ENCODE measurements at regions of chr12 and their contacts with region 1.

Region 1: DNA sequence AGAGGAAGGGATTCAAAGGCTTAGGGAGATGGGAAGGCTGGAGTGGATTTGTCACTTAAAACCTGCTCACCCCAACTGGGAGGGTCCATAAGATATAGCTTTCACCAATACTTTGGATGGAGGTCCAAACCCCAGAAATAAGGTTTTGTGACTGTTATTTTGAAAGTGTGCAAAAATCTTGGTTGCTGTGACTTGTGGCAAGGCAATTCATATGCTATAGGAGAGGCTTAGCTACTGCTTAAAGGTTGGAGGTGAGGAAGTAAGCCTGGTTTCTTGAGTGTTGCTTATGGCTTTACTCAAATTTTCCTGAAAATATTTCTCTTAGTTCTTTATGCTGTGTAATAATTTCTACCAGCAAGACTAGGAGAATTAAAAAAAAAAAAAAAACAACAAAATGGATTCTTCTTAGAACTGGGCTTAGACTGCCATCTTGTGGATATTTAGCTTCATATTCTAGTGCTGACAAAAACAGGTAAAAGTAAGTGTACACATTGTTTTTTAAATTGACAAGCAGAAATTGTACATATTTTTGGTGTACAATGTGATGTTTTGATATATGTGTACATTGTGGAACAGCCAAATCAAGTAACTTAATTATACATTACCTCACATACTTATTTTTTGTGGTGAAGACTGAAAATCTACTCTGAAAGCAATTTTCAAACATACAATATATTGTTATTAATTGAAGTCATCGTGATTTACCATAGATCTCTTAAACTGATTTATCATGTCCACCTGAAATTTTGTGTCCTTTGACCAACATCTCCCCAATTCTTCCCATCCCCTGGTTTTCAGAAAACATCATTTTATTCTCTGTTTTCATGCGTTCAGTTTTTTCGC is 23.0 kb downstream of the PDE6H start:
- DNase-seq: peak in 7 of 9 donors; percentile 27 to 76 (median 58)
- ATAC-seq: peak; percentile 84
- H3K4me3 ChIP-seq: no peak overlapping the region
- H3K4me3 Mint-ChIP-seq: peak overlapping the region in 8 of 10 donors; percentile 9 to 73 (median 62)
- H3K27ac ChIP-seq: peak overlapping the region; percentile 14
- H3K27ac Mint-ChIP-seq: peak overlapping the region; percentile 6 to 93 (median 88)
- H3K4me1 ChIP-seq: peaks cover 16 to 27% of the 10 kb centered on the region in 2 donors
- H3K4me1 Mint-ChIP-seq: peaks cover 21 to 35% (median 31%) of the 10 kb centered on the region in 7 donors
- H3K27me3 ChIP-seq: peaks cover 0 to 4% of the 10 kb centered on the region in 2 donors
- H3K27me3 Mint-ChIP-seq: peaks cover 0 to 32% (median 0%) of the 10 kb centered on the region in 5 donors

Region 2: GRCh38 chr12:14601692-14602478 is 393.9 kb before region 1 on chr12:
- CTCF ChIA-PET with region 1: no interaction called
- POLR2A ChIA-PET with region 1: no interaction called
- intact Hi-C with region 1: no loop called
- DNase-seq: no peak
- ATAC-seq: no peak
- H3K4me3 ChIP-seq: no peak overlapping the region
- H3K4me3 Mint-ChIP-seq: no peak overlapping the region
- H3K27ac ChIP-seq: no peak overlapping the region
- H3K27ac Mint-ChIP-seq: no peak overlapping the region
- H3K4me1 ChIP-seq: no peaks in the 10 kb centered on the region
- H3K4me1 Mint-ChIP-seq: no peaks in the 10 kb centered on the region
- H3K27me3 ChIP-seq: no peaks in the 10 kb centered on the region
- H3K27me3 Mint-ChIP-seq: peaks cover 16 to 35% (median 24%) of the 10 kb centered on the region in 5 donors

Region 3: DNA sequence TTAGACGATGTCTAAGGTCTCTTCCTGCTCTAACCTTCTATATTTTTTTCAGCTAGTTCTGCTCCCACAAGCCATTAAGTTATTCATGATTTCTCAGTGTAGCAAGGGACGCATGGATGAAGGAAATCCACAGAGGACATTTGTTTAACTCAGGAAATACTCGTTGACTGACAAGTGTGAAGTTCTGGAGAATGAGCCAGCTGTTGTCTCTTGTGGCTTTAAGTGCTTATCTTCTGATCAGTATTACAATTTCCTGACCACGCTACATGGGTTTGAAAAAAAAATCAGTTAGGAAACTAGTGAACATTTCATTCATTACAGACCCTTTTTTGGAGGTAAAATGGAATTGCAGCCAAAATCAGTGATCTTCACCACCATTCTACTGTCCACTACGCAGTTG is 352.6 kb before region 1 on chr12:
- CTCF ChIA-PET with region 1: no interaction called
- POLR2A ChIA-PET with region 1: no interaction called
- intact Hi-C with region 1: loop called in 1 of 2 experiments (anchors 5 kb)
- DNase-seq: peak in 6 of 9 donors; percentile 29 to 52 (median 42)
- ATAC-seq: peak; percentile 46
- H3K4me3 ChIP-seq: no peak overlapping the region
- H3K4me3 Mint-ChIP-seq: peak overlapping the region; percentile 35 to 79 (median 71)
- H3K27ac ChIP-seq: no peak overlapping the region
- H3K27ac Mint-ChIP-seq: peak overlapping the region; percentile 8 to 83 (median 54)
- H3K4me1 ChIP-seq: peaks cover 14 to 21% of the 10 kb centered on the region in 2 donors
- H3K4me1 Mint-ChIP-seq: peaks cover 15 to 26% (median 24%) of the 10 kb centered on the region in 7 donors
- H3K27me3 ChIP-seq: no peaks in the 10 kb centered on the region
- H3K27me3 Mint-ChIP-seq: peaks cover 0 to 9% (median 0%) of the 10 kb centered on the region in 5 donors

Region 4: DNA sequence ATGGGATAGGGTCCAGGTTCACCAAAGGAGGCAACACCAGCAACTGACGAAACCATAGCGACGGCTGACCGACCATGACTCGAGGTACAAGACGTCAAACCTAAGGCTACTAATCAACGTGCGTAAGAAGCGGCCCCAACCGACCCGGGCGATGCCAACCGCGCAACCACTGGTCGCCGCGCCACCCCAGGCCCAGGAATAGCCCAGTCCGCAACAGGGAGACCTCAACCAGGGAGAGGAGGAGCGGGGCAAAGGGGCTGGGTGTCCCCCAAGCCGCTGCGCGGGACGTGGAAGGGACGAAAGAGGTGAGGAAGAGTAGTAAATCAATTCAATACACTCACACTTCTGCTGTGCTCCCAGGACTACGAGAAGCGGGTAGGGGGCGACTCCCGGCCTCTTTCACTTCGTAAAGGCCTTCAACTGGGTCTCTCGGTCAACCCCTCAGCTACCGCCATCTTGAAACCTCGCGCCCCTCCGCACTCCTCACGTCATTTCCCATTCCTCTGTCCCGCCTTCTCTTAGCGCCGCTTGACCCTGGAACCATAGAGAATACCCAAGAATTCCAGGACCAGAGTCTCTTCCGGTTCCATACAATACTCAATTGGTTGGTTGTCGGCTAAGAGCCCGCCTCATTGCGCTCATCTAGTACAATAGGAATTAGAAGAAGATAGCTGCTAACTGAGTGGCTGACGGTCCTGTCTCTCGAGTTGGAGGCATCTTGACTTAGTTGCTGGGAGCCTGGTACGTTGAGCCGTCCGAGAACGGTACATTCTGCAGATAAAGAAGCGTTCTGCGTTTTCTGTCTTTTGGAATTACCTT is 192.6 kb before region 1 on chr12 and contains the starts of genes C12orf60 and WBP11:
- CTCF ChIA-PET with region 1: no interaction called
- POLR2A ChIA-PET with region 1: interaction called, 15 read pairs
- intact Hi-C with region 1: loop called in 1 of 2 experiments (anchors 1 kb)
- DNase-seq: peak; percentile 56 to 95 (median 91)
- ATAC-seq: peak; percentile 98
- H3K4me3 ChIP-seq: peak within 1 kb of the TSS; percentile 80
- H3K4me3 Mint-ChIP-seq: no peak within 1 kb of the TSS
- H3K27ac ChIP-seq: peak within 1 kb of the TSS; percentile 97
- H3K27ac Mint-ChIP-seq: no peak within 1 kb of the TSS
- H3K4me1 ChIP-seq: peaks cover 14 to 19% of the 10 kb centered on the region in 2 donors
- H3K4me1 Mint-ChIP-seq: peaks cover 0 to 26% (median 10%) of the 10 kb centered on the region in 7 donors
- H3K27me3 ChIP-seq: no peaks in the 10 kb centered on the region
- H3K27me3 Mint-ChIP-seq: no peaks in the 10 kb centered on the region
- total RNA-seq, gene C12orf60: 0.22 to 1.7 (median 1.2) TPM in 4 of 5 experiments, not detected in the other
- total RNA-seq, gene WBP11: 77.9 to 129 (median 90.4) TPM

Region 5: GRCh38 chr12:14901228-14901562 is 94.6 kb before region 1 on chr12:
- CTCF ChIA-PET with region 1: no interaction called
- POLR2A ChIA-PET with region 1: no interaction called
- intact Hi-C with region 1: no loop called
- DNase-seq: no peak
- ATAC-seq: no peak
- H3K4me3 ChIP-seq: no peak overlapping the region
- H3K4me3 Mint-ChIP-seq: no peak overlapping the region
- H3K27ac ChIP-seq: no peak overlapping the region
- H3K27ac Mint-ChIP-seq: peak overlapping the region in 1 of 9 donors; percentile 48
- H3K4me1 ChIP-seq: peaks cover 0 to 3% of the 10 kb centered on the region in 2 donors
- H3K4me1 Mint-ChIP-seq: peaks cover 6 to 38% (median 21%) of the 10 kb centered on the region in 7 donors
- H3K27me3 ChIP-seq: no peaks in the 10 kb centered on the region
- H3K27me3 Mint-ChIP-seq: no peaks in the 10 kb centered on the region

Region 6: GRCh38 chr12:14913381-14913781 is 82.4 kb before region 1 on chr12:
- CTCF ChIA-PET with region 1: no interaction called
- POLR2A ChIA-PET with region 1: no interaction called
- intact Hi-C with region 1: no loop called
- DNase-seq: no peak
- ATAC-seq: no peak
- H3K4me3 ChIP-seq: no peak overlapping the region
- H3K4me3 Mint-ChIP-seq: no peak overlapping the region
- H3K27ac ChIP-seq: no peak overlapping the region
- H3K27ac Mint-ChIP-seq: peak overlapping the region in 5 of 9 donors; percentile 7 to 81 (median 46)
- H3K4me1 ChIP-seq: no peaks in the 10 kb centered on the region
- H3K4me1 Mint-ChIP-seq: peaks cover 10 to 29% (median 25%) of the 10 kb centered on the region in 7 donors
- H3K27me3 ChIP-seq: no peaks in the 10 kb centered on the region
- H3K27me3 Mint-ChIP-seq: no peaks in the 10 kb centered on the region

Region 7: GRCh38 chr12:14937689-14938088 is 58.1 kb before region 1 on chr12:
- CTCF ChIA-PET with region 1: interaction called, 30 read pairs
- POLR2A ChIA-PET with region 1: interaction called, 10 read pairs
- intact Hi-C with region 1: loop called (anchors 1 kb)
- DNase-seq: no peak
- ATAC-seq: peak; percentile 57
- H3K4me3 ChIP-seq: no peak overlapping the region
- H3K4me3 Mint-ChIP-seq: peak overlapping the region in 5 of 10 donors; percentile 3 to 59 (median 25)
- H3K27ac ChIP-seq: peak overlapping the region; percentile 36
- H3K27ac Mint-ChIP-seq: peak overlapping the region; percentile 56 to 94 (median 84)
- H3K4me1 ChIP-seq: peaks cover 0 to 22% of the 10 kb centered on the region in 2 donors
- H3K4me1 Mint-ChIP-seq: peaks cover 34 to 81% (median 69%) of the 10 kb centered on the region in 7 donors
- H3K27me3 ChIP-seq: no peaks in the 10 kb centered on the region
- H3K27me3 Mint-ChIP-seq: no peaks in the 10 kb centered on the region

Region 8: GRCh38 chr12:14981049-14981448 is 14.8 kb before region 1 on chr12:
- CTCF ChIA-PET with region 1: interaction called, 3 read pairs
- POLR2A ChIA-PET with region 1: interaction called, 5 read pairs
- intact Hi-C with region 1: loop called (anchors 1 to 2 kb)
- DNase-seq: no peak
- ATAC-seq: peak; percentile 84
- H3K4me3 ChIP-seq: no peak overlapping the region
- H3K4me3 Mint-ChIP-seq: peak overlapping the region in 6 of 10 donors; percentile 10 to 62 (median 18)
- H3K27ac ChIP-seq: no peak overlapping the region
- H3K27ac Mint-ChIP-seq: peak overlapping the region in 6 of 9 donors; percentile 1 to 78 (median 18)
- H3K4me1 ChIP-seq: peaks cover 17 to 50% of the 10 kb centered on the region in 2 donors
- H3K4me1 Mint-ChIP-seq: peaks cover 41 to 75% (median 68%) of the 10 kb centered on the region in 7 donors
- H3K27me3 ChIP-seq: no peaks in the 10 kb centered on the region
- H3K27me3 Mint-ChIP-seq: no peaks in the 10 kb centered on the region

Region 9: DNA sequence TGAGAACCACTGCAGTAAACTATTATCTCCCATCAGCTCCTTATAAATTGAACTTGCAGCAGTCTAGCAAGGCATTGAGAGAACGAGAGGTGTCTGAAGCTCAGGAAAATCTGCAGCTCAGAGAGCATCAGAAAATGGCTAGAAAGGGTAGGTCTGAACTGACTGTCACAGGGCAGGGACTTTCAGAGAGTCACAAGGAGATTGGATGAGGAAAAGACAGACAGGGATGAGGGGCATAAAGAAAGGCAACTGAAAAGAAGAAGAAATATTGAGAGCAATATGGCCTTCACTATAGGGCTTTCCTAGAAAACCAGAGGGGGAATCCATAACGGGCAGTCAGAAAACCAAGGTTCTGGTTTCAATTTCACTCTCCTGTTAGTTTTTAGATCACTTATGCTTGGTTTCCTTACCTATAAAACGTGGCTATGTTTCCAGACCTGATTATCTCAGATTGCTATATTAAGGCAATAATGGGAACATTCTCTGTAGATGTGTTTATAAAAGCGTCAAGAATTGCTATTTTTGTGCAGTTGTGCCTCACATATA is 17.9 kb after region 1 on chr12:
- CTCF ChIA-PET with region 1: no interaction called
- POLR2A ChIA-PET with region 1: no interaction called
- intact Hi-C with region 1: no loop called
- DNase-seq: no peak
- ATAC-seq: no peak
- H3K4me3 ChIP-seq: no peak overlapping the region
- H3K4me3 Mint-ChIP-seq: no peak overlapping the region
- H3K27ac ChIP-seq: no peak overlapping the region
- H3K27ac Mint-ChIP-seq: no peak overlapping the region
- H3K4me1 ChIP-seq: no peaks in the 10 kb centered on the region
- H3K4me1 Mint-ChIP-seq: no peaks in the 10 kb centered on the region
- H3K27me3 ChIP-seq: no peaks in the 10 kb centered on the region
- H3K27me3 Mint-ChIP-seq: peaks cover 0 to 24% (median 14%) of the 10 kb centered on the region in 5 donors

Region 10: GRCh38 chr12:15789220-15790171 is 793.7 kb after region 1 on chr12 and contains the start of gene EPS8:
- CTCF ChIA-PET with region 1: no interaction called
- POLR2A ChIA-PET with region 1: no interaction called
- intact Hi-C with region 1: loop called in 1 of 2 experiments (anchors 10 kb)
- DNase-seq: peak; percentile 82 to 92 (median 91)
- ATAC-seq: peak; percentile 95
- H3K4me3 ChIP-seq: peak within 1 kb of the TSS; percentile 78
- H3K4me3 Mint-ChIP-seq: peak within 1 kb of the TSS; percentile 91 to 99 (median 96)
- H3K27ac ChIP-seq: peak within 1 kb of the TSS; percentile 63
- H3K27ac Mint-ChIP-seq: peak within 1 kb of the TSS; percentile 58 to 97 (median 84)
- H3K4me1 ChIP-seq: peaks cover 0 to 7% of the 10 kb centered on the region in 2 donors
- H3K4me1 Mint-ChIP-seq: peaks cover 10 to 17% (median 15%) of the 10 kb centered on the region in 7 donors
- H3K27me3 ChIP-seq: peaks cover 0 to 11% of the 10 kb centered on the region in 2 donors
- H3K27me3 Mint-ChIP-seq: peaks cover 26 to 74% (median 49%) of the 10 kb centered on the region in 5 donors
- total RNA-seq, gene EPS8: 2.0 to 3.1 (median 2.7) TPM